Panc1 (cell line): ENCODE measurements at regions of chr5 and their contacts with region 1.

Region 1: GRCh38 chr5:149618581-149619251 is 37.4 kb downstream of the ARHGEF37 start:
- DNase-seq: peak; percentile 60
- ATAC-seq: peak; percentile 90
- H3K4me3 ChIP-seq: no peak overlapping the region
- H3K27ac ChIP-seq: peak overlapping the region; percentile 15; the same call in 1 of the 2 replicates
- H3K4me1 ChIP-seq: peaks cover 5% of the 10 kb centered on the region; the same call in 1 of the 2 replicates
- H3K27me3 ChIP-seq: no peaks in the 10 kb centered on the region
- CTCF ChIP-seq: peak; percentile 89

Region 2: GRCh38 chr5:148984333-148984732 is 634.4 kb before region 1 on chr5:
- CTCF ChIA-PET with region 1: no interaction called
- POLR2A ChIA-PET with region 1: no interaction called
- in situ Hi-C with region 1: no loop called
- intact Hi-C with region 1: no loop called
- DNase-seq: peak; percentile 51
- ATAC-seq: peak; percentile 64; the same call in 1 of the 2 replicates
- H3K4me3 ChIP-seq: no peak overlapping the region
- H3K27ac ChIP-seq: no peak overlapping the region
- H3K4me1 ChIP-seq: no peaks in the 10 kb centered on the region
- H3K27me3 ChIP-seq: no peaks in the 10 kb centered on the region
- CTCF ChIP-seq: no peak

Region 3: GRCh38 chr5:149310947-149311658 is 307.6 kb before region 1 on chr5:
- CTCF ChIA-PET with region 1: no interaction called
- POLR2A ChIA-PET with region 1: no interaction called
- in situ Hi-C with region 1: no loop called
- intact Hi-C with region 1: no loop called
- DNase-seq: no peak
- ATAC-seq: 0 out of 2 replicates have a peak, but pooled peaks have one; percentile 19
- H3K4me3 ChIP-seq: no peak overlapping the region
- H3K27ac ChIP-seq: no peak overlapping the region
- H3K4me1 ChIP-seq: no peaks in the 10 kb centered on the region; the same call in 1 of the 2 replicates
- H3K27me3 ChIP-seq: no peaks in the 10 kb centered on the region
- CTCF ChIP-seq: no peak

Region 4: GRCh38 chr5:149345147-149345875 is 273.4 kb before region 1 on chr5 and contains the start of gene GRPEL2:
- CTCF ChIA-PET with region 1: no interaction called
- POLR2A ChIA-PET with region 1: no interaction called
- in situ Hi-C with region 1: no loop called
- intact Hi-C with region 1: no loop called
- DNase-seq: peak; percentile 88
- ATAC-seq: peak; percentile 100
- H3K4me3 ChIP-seq: peak within 1 kb of the TSS; percentile 82 to 89
- H3K27ac ChIP-seq: peak within 1 kb of the TSS; percentile 96
- H3K4me1 ChIP-seq: peaks cover 7% of the 10 kb centered on the region
- H3K27me3 ChIP-seq: no peaks in the 10 kb centered on the region
- CTCF ChIP-seq: no peak
- total RNA-seq, gene GRPEL2: 30.1 TPM

Region 5: DNA sequence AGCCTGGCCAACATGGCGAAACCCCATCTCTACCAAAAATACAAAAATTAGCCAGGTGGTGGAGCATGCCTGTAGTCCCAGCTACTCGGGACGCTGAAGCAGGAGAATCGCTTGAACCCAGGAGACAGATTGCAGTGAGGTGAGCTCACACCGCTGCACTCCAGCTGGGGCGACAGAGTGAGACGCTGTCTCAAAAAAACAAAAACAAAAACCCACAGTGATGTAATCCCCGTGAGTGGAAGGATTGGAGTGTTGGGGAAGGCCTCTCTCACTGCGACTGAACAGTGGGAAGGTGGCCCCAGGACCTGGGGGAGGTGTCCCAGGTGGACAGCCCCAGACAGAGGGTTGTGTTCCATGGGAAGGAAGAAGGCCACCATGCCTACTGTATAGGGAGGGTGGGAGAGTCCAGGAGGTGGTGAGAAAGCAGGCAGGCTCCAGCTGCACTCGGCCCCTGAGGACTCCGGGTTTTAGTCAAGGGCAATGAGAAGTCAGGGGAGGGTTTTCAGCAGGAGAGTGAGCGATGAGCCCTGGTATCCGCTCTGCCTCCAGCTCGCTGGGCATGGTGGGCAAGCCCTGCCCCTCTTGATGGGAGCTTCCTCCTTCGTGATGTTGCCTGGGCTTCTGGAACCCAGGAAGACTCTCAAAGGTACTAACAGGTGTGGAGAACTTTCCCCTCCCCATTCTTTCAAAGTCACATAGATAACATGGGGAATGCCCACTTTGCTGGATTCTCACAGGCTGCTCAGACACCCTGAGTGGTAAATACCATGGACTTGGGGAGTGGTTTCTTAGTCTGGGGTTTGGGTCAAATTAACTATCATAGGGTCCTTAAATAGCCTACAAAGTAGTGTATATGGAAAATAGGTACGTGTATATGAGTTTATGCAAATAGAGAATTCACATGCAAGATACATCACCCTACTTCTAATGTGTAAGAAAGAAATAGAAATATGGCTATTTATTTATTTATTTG is 186.0 kb after region 1 on chr5:
- CTCF ChIA-PET with region 1: interaction called, 10 read pairs
- POLR2A ChIA-PET with region 1: no interaction called
- in situ Hi-C with region 1: no loop called
- intact Hi-C with region 1: no loop called
- DNase-seq: no peak
- ATAC-seq: no peak
- H3K4me3 ChIP-seq: no peak overlapping the region
- H3K27ac ChIP-seq: peak overlapping the region; percentile 39; the same call in 1 of the 2 replicates
- H3K4me1 ChIP-seq: peaks cover 28% of the 10 kb centered on the region
- H3K27me3 ChIP-seq: no peaks in the 10 kb centered on the region
- CTCF ChIP-seq: no peak

Region 6: DNA sequence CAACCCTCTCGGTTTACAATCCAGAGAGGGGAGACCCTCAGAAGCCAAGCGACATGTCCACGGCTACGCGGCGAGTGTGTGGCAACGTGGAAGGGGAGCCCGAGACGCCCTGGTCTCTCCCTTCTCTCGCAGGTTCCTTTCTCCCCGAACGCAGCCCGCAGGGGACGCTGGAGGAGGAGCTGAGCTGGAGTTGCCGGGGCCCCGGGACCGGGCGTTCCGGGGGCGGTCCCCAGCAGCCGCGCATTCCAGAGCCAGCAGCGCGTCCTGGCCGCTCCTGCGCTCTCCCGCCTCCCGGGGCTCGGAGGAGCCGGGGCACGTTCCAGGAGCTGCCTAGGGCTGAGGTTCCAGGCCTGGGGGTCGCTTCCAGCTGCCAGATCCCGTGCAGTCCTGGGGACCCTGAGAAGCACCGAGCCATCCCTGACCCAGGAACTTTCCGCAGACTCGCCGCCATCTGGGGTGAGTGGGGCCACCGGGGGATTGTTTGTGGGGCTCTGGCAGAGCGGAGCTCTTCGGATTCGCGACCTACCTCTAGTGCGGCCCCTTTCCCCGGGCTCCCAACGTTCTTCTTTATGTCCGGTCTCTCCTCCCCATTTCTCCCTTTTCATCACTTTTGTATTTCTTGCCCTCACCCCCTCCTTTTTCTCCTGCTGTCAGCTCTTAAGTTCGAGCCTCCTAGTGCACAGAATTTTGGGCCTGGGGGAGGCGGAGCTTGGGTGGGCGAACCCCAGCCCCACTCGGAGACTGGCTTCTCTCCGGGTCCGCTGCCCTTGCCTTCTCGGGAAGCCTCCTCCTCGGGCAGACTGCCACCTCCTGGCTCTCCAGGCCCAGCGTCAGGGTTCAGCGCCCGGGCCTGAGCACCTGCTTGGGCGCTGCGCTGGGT is 1160.0 kb after region 1 on chr5 and contains the start of gene SMIM3:
- CTCF ChIA-PET with region 1: no interaction called
- POLR2A ChIA-PET with region 1: no interaction called
- in situ Hi-C with region 1: no loop called
- intact Hi-C with region 1: no loop called
- DNase-seq: no peak
- ATAC-seq: peak; percentile 82
- H3K4me3 ChIP-seq: peak within 1 kb of the TSS; percentile 87 to 88
- H3K27ac ChIP-seq: peak within 1 kb of the TSS; percentile 86
- H3K4me1 ChIP-seq: peaks cover 54% of the 10 kb centered on the region
- H3K27me3 ChIP-seq: no peaks in the 10 kb centered on the region
- CTCF ChIP-seq: peak; percentile 79
- total RNA-seq, gene SMIM3: 55.2 TPM